GM12878 (cell line): ENCODE measurements at regions of chr2 and their contacts with region 1.

Region 1: DNA sequence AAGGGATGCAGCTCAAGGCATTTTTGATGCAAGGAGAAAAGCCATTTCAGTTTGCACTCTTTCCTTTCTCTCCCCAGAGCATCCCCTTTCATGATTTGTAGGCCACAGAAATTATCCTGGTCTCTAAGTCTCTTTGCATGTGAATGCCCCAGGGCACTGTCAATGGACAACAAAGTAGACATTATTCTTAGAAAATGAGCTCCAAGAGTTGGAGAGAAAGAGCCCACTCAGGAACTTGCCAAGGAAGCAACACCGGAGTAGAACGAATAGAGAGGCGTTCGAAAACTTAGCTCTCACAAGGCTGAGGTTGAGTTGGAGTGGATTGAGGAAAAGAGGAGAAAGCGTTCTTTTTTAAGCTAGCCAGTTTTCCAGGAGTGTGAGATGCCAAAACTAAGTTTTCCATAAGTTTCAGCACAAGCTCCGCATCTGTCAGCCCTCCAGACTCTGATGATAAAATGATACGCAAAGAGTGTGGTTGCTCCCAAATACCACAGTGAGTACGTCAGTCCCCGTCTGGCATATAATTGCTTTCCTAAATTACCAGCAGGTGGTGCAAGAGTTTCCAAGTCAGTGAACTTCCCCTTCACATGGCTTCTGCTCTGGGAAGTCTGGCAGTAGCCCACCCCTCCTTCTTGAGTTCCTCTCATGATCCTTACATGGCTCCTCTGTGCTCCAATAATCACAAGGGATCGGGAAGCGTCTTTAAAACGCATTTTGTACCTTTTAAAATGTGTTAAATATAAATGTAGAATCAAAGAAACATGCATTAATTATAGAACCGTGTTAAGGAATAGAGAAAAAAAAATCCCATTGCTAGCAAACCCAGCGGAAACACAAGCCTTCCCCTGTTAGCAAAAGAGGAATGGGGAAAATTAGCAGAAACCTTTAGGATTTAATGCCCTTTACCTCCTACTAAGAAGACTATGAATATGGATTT is 1060.6 kb upstream of the FANCL start:
- DNase-seq: no peak
- ATAC-seq: peak; percentile 74
- H3K4me3 ChIP-seq: no peak overlapping the region
- H3K27ac ChIP-seq: no peak overlapping the region
- H3K4me1 ChIP-seq: no peaks in the 10 kb centered on the region
- H3K27me3 ChIP-seq: no peaks in the 10 kb centered on the region
- CTCF ChIP-seq: peak; percentile 37 to 54 (median 44); a peak in 5 of 6 replicates
- EP300 ChIP-seq: no peak
- POLR2A ChIP-seq: no peak
- RAD21 ChIP-seq: peak; percentile 51

Region 2: DNA sequence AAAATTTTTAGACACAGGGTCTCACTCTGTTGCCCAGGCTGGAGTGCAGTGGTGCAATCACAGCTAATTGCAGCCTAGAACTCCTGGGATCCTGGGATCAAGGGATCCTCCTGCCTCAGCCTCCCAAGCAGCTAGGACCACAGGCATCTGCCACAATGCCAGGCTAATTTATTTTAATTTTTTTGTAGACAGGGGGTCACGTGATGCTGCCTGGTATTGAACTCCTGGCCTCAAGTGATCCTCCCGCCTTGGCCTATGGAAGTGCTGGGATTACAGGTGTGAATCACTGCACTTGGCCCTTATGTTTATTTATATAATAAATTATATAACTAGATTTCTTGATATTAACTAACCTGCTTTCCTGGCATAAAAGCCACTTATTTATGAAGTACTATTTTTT is 21.1 kb after region 1 on chr2:
- CTCF ChIA-PET with region 1: no interaction called
- POLR2A ChIA-PET with region 1: no interaction called
- RAD21 ChIA-PET with region 1: no interaction called
- SMC1A ChIA-PET with region 1: no interaction called
- in situ Hi-C with region 1: no loop called
- intact Hi-C with region 1: no loop called
- DNase-seq: no peak
- ATAC-seq: no peak
- H3K4me3 ChIP-seq: no peak overlapping the region
- H3K27ac ChIP-seq: no peak overlapping the region
- H3K4me1 ChIP-seq: no peaks in the 10 kb centered on the region
- H3K27me3 ChIP-seq: no peaks in the 10 kb centered on the region
- CTCF ChIP-seq: no peak
- EP300 ChIP-seq: no peak
- POLR2A ChIP-seq: no peak
- RAD21 ChIP-seq: no peak

Region 3: DNA sequence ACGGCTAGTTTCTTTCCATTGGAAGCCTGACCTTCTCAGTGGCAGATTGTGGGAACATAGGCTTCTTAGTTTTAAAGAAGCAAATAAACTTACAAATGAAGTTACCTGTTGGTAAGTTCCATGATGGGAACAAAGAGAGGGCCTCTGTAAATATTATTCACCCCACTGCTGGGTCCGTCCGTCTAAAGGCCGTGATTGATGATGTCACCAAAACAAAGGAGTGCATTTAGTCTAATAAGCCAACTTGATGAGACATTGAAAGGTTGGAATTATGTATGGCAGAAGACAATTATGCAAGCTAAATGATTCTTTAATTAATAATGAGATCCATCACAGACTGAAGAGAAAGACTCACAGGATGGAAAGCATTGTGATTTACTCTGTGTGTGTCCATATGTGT is 31.3 kb after region 1 on chr2:
- CTCF ChIA-PET with region 1: no interaction called
- POLR2A ChIA-PET with region 1: no interaction called
- RAD21 ChIA-PET with region 1: no interaction called
- SMC1A ChIA-PET with region 1: no interaction called
- in situ Hi-C with region 1: no loop called
- intact Hi-C with region 1: no loop called
- DNase-seq: no peak
- ATAC-seq: no peak
- H3K4me3 ChIP-seq: no peak overlapping the region
- H3K27ac ChIP-seq: no peak overlapping the region
- H3K4me1 ChIP-seq: no peaks in the 10 kb centered on the region
- H3K27me3 ChIP-seq: no peaks in the 10 kb centered on the region
- CTCF ChIP-seq: no peak
- EP300 ChIP-seq: no peak
- POLR2A ChIP-seq: no peak
- RAD21 ChIP-seq: no peak

Region 4: GRCh38 chr2:59567151-59567550 is 265.4 kb after region 1 on chr2:
- CTCF ChIA-PET with region 1: no interaction called
- POLR2A ChIA-PET with region 1: no interaction called
- RAD21 ChIA-PET with region 1: no interaction called
- SMC1A ChIA-PET with region 1: no interaction called
- in situ Hi-C with region 1: no loop called
- intact Hi-C with region 1: loop called (anchors 10 kb)
- DNase-seq: no peak
- ATAC-seq: no peak
- H3K4me3 ChIP-seq: no peak overlapping the region
- H3K27ac ChIP-seq: no peak overlapping the region
- H3K4me1 ChIP-seq: no peaks in the 10 kb centered on the region
- H3K27me3 ChIP-seq: no peaks in the 10 kb centered on the region
- CTCF ChIP-seq: no peak
- EP300 ChIP-seq: no peak
- POLR2A ChIP-seq: no peak
- RAD21 ChIP-seq: no peak

Region 5: GRCh38 chr2:60152226-60152833 is 850.6 kb after region 1 on chr2:
- CTCF ChIA-PET with region 1: interaction called, 3 read pairs
- POLR2A ChIA-PET with region 1: no interaction called
- RAD21 ChIA-PET with region 1: no interaction called
- SMC1A ChIA-PET with region 1: no interaction called
- in situ Hi-C with region 1: no loop called
- intact Hi-C with region 1: loop called (anchors 2 kb)
- DNase-seq: no peak
- ATAC-seq: peak; percentile 55; the same call in 2 of the 3 replicates
- H3K4me3 ChIP-seq: no peak overlapping the region
- H3K27ac ChIP-seq: no peak overlapping the region
- H3K4me1 ChIP-seq: peaks cover 9% of the 10 kb centered on the region
- H3K27me3 ChIP-seq: no peaks in the 10 kb centered on the region
- CTCF ChIP-seq: peak; percentile 48 to 87 (median 75)
- EP300 ChIP-seq: no peak
- POLR2A ChIP-seq: no peak
- RAD21 ChIP-seq: peak; percentile 60

Region 6: DNA sequence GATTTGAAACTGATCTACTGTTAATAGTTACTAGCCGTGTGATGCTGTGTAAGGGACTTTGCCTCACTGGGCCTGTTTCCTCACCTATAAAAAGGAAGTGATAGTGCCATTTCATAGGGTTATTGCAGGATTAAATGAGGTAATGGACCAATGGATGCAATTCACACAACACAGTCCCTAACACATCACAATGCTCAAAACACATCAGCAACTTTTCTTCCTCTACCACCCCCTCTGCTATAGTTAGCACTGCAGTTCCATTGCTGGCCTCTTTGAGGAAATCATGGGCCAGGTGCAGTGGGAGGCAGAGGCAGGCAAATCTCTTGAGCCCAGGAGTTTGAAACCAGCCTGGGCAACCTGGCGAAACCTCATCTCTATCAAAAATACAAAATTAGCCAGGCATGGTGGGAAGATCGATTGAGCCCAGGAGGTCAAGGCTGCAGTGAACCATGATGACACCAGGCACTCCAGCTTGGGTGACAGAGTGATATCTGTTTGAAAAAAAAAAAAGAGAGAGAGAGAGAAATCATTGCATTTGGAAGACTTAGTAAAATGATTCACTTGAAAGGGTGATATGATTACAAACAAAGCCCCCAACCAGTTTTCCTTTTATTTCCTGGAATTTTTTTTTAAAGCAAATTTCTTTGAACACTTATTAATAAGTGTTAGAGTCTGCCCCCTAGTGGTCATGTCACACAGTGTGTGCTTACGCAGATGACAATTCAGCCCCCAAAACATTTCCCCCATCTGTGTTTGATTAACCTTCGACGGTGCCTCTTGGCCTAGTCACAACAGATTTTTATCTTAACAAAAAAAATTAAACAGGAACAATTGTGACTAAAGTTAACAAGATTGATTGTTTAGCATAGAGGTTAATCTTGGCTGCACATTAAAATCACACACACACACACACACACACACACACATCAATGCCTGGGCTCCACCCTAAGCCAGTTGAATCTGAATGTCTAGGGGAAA is 1340.4 kb after region 1 on chr2:
- CTCF ChIA-PET with region 1: no interaction called
- POLR2A ChIA-PET with region 1: no interaction called
- RAD21 ChIA-PET with region 1: no interaction called
- SMC1A ChIA-PET with region 1: no interaction called
- in situ Hi-C with region 1: no loop called
- intact Hi-C with region 1: loop called (anchors 10 kb)
- DNase-seq: no peak
- ATAC-seq: peak; percentile 93
- H3K4me3 ChIP-seq: no peak overlapping the region
- H3K27ac ChIP-seq: no peak overlapping the region
- H3K4me1 ChIP-seq: peaks cover 2% of the 10 kb centered on the region; the same call in 1 of the 2 replicates
- H3K27me3 ChIP-seq: peaks cover 0 to 5% of the 10 kb centered on the region in 2 experiments; a peak in 2 of 4 replicates
- CTCF ChIP-seq: peak; percentile 55 to 78 (median 69)
- EP300 ChIP-seq: no peak
- POLR2A ChIP-seq: no peak
- RAD21 ChIP-seq: peak; percentile 38; the same call in 1 of the 2 replicates